A549 (cell line): ENCODE measurements at regions of chr1 and their contacts with region 1.

Region 1: DNA sequence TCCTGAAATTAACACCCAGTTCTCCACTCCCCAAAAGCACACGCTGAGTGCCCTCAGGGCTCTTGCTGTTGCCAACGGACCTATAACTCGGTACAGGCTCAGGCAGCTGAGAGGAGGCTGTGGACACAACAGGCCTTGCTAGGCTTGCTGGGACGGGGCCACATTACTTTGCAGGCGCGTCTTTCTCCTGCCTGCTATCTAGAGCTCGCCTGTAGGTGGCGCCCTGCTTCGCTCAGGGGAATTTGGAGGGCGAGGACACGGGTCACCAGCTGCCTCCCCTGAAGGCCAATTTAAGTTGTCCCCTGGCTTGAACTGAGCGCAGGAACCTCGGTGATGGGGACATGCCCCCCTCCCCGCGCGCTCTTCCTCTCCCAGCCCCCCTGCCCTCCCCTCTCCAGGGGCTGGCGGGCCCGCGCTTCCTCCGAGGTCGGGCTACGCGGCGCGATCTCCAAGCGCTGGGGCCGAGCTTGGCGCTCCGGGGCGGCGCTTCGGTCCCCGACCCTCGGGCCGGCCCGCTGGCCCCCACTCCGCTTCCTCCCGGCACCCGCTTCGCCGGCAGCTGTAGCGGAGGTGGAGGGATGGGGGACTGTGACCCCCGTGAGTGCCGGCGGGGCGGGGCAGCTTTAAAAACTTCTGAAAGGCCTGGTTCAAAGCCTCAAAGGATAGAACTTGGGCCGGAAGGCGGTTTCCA is 32.4 kb upstream of the NFIA start:
- DNase-seq: peak; percentile 80 to 86
- ATAC-seq: peak; percentile 82 to 87
- H3K4me3 ChIP-seq: peak overlapping the region; percentile 83
- H3K27ac ChIP-seq: peak overlapping the region; percentile 91 to 95
- H3K4me1 ChIP-seq: peaks cover 17% of the 10 kb centered on the region; the same call in 2 of the 3 replicates
- CTCF ChIP-seq: peak; percentile 76
- EP300 ChIP-seq: no peak
- POLR2A ChIP-seq: peak; percentile 14; the same call in 1 of the 2 replicates
- RAD21 ChIP-seq: peak; percentile 78 to 80

Region 2: DNA sequence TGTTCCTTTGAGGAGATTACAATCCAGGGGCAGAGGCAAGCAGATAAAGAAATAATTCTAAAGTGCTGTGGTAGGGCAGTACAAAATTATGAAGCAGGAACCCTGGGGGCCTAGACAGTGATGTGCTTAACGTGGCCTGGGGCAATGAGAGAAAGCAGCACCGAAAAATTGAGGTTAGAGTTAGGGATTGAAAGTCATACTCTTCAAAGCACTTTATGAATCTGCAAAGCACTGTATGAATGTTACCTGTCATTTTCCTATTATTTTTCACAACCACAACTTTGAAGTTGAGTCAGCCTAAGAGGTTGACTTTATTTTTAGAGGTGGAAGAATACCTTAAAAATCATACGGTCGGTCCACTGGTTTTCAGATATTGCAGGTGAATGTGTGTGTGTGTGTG is 151.0 kb before region 1 on chr1:
- CTCF ChIA-PET with region 1: no interaction called
- POLR2A ChIA-PET with region 1: no interaction called
- DNase-seq: no peak
- ATAC-seq: no peak
- H3K4me3 ChIP-seq: no peak overlapping the region
- H3K27ac ChIP-seq: no peak overlapping the region
- H3K4me1 ChIP-seq: no peaks in the 10 kb centered on the region
- CTCF ChIP-seq: no peak
- EP300 ChIP-seq: no peak
- POLR2A ChIP-seq: no peak
- RAD21 ChIP-seq: no peak

Region 3: GRCh38 chr1:61077676-61078541 is 27.9 kb after region 1 on chr1:
- CTCF ChIA-PET with region 1: interaction called, 20 read pairs
- POLR2A ChIA-PET with region 1: interaction called, 9 read pairs
- DNase-seq: peak; percentile 92 to 98
- ATAC-seq: peak; percentile 25 to 73; a peak in 5 of 6 replicates
- H3K4me3 ChIP-seq: peak overlapping the region; percentile 54
- H3K27ac ChIP-seq: peak overlapping the region; percentile 88 to 91
- H3K4me1 ChIP-seq: peaks cover 34% of the 10 kb centered on the region
- CTCF ChIP-seq: no peak
- EP300 ChIP-seq: no peak
- POLR2A ChIP-seq: no peak
- RAD21 ChIP-seq: no peak

Region 4: GRCh38 chr1:61337981-61338848 is 288.2 kb after region 1 on chr1:
- CTCF ChIA-PET with region 1: interaction called, 32 read pairs
- POLR2A ChIA-PET with region 1: no interaction called
- DNase-seq: peak; percentile 66 to 81
- ATAC-seq: peak; percentile 99
- H3K4me3 ChIP-seq: no peak overlapping the region; the same call in 2 of the 3 replicates
- H3K27ac ChIP-seq: peak overlapping the region; percentile 81 to 91
- H3K4me1 ChIP-seq: peaks cover 30% of the 10 kb centered on the region
- CTCF ChIP-seq: peak; percentile 78
- EP300 ChIP-seq: no peak
- POLR2A ChIP-seq: no peak
- RAD21 ChIP-seq: peak; percentile 81 to 83

Region 5: GRCh38 chr1:61851849-61852669 is 802.1 kb after region 1 on chr1:
- CTCF ChIA-PET with region 1: interaction called, 15 read pairs
- POLR2A ChIA-PET with region 1: no interaction called
- DNase-seq: peak; percentile 6 to 59
- ATAC-seq: peak; percentile 66 to 82
- H3K4me3 ChIP-seq: no peak overlapping the region
- H3K27ac ChIP-seq: no peak overlapping the region
- H3K4me1 ChIP-seq: no peaks in the 10 kb centered on the region
- CTCF ChIP-seq: peak; percentile 68
- EP300 ChIP-seq: no peak
- POLR2A ChIP-seq: no peak
- RAD21 ChIP-seq: peak; percentile 67 to 82